Panc1 (cell line): ENCODE measurements at regions of chr11 and their contacts with region 1.

Region 1: GRCh38 chr11:19320827-19321226 is 80.1 kb upstream of the E2F8 start:
- DNase-seq: no peak
- ATAC-seq: no peak
- H3K4me3 ChIP-seq: no peak overlapping the region
- H3K27ac ChIP-seq: no peak overlapping the region
- H3K4me1 ChIP-seq: no peaks in the 10 kb centered on the region
- H3K27me3 ChIP-seq: peaks cover 14% of the 10 kb centered on the region
- CTCF ChIP-seq: no peak

Region 2: GRCh38 chr11:19290356-19290755 is 30.5 kb before region 1 on chr11:
- CTCF ChIA-PET with region 1: no interaction called
- POLR2A ChIA-PET with region 1: no interaction called
- in situ Hi-C with region 1: no loop called
- intact Hi-C with region 1: no loop called
- DNase-seq: no peak
- ATAC-seq: no peak
- H3K4me3 ChIP-seq: no peak overlapping the region
- H3K27ac ChIP-seq: no peak overlapping the region
- H3K4me1 ChIP-seq: no peaks in the 10 kb centered on the region
- H3K27me3 ChIP-seq: 0 out of 2 replicates have a peak, but pooled peaks cover 3% of the 10 kb centered on the region
- CTCF ChIP-seq: no peak

Region 3: GRCh38 chr11:19848219-19848618 is 527.4 kb after region 1 on chr11:
- CTCF ChIA-PET with region 1: interaction called, 10 read pairs
- POLR2A ChIA-PET with region 1: no interaction called
- in situ Hi-C with region 1: no loop called
- intact Hi-C with region 1: no loop called
- DNase-seq: no peak
- ATAC-seq: no peak
- H3K4me3 ChIP-seq: no peak overlapping the region
- H3K27ac ChIP-seq: no peak overlapping the region
- H3K4me1 ChIP-seq: no peaks in the 10 kb centered on the region
- H3K27me3 ChIP-seq: no peaks in the 10 kb centered on the region
- CTCF ChIP-seq: no peak